ENCODE measurements at regions of chr5 and their contacts with region 1.

Region 1: DNA sequence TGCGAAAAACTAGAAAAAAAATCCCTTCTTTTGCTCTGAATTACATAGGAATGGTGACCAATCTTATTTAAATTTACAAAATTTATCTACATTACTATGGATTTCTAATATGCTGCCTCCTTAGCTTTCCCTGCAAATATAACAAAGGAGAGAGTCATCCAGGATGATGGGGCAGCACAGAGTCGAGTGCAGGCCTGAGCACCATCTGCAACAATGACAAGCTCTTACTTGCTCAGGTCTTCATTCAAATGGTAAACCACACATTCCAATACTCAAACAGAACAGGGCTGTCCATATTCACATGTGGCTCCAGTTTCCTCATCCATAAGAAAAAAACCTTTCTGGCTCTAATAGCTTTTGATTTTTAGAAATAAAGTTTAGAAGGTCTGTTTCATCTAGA is 33.5 kb upstream of the ZNF354B start:
- DNase-seq: no peak
- H3K4me3 ChIP-seq: no peak overlapping the region
- H3K27ac ChIP-seq: no peak overlapping the region
- H3K4me1 ChIP-seq: no peaks in the 10 kb centered on the region
- H3K27me3 ChIP-seq: no peaks in the 10 kb centered on the region
- CTCF ChIP-seq: no peak
- EP300 ChIP-seq: no peak
- POLR2A ChIP-seq: no peak

Region 2: GRCh38 chr5:178474562-178475184 is 351.5 kb before region 1 on chr5:
- intact Hi-C with region 1: loop called in 1 of 4 experiments (anchors 5 kb)
- DNase-seq: no peak
- H3K4me3 ChIP-seq: no peak overlapping the region
- H3K27ac ChIP-seq: no peak overlapping the region
- H3K4me1 ChIP-seq: no peaks in the 10 kb centered on the region
- H3K27me3 ChIP-seq: no peaks in the 10 kb centered on the region
- CTCF ChIP-seq: no peak
- EP300 ChIP-seq: no peak
- POLR2A ChIP-seq: no peak

Region 3: DNA sequence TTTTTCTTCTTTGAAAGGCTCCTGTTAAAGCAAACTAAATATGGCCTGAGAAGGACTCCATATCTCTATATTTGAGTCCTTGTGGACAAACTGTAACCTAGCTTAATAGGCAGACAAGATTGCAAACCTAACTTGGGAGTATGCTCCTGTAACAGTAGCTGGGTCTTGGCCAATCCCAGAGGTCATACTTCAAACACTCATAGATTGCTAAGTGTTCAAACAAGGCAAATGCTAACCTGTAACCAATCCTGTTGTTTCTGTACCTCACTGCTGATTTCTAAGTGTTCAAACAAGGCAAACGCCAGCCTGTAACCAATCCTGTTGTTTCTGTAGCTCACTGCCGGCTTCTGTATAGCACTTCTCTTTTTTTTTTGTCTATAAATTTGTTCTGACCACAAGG is 148.8 kb before region 1 on chr5:
- intact Hi-C with region 1: no loop called
- DNase-seq: no peak
- H3K4me3 ChIP-seq: no peak overlapping the region
- H3K27ac ChIP-seq: no peak overlapping the region
- H3K4me1 ChIP-seq: no peaks in the 10 kb centered on the region
- H3K27me3 ChIP-seq: no peaks in the 10 kb centered on the region
- CTCF ChIP-seq: no peak
- EP300 ChIP-seq: no peak
- POLR2A ChIP-seq: no peak

Region 4: GRCh38 chr5:178872302-178872701 is 46.1 kb after region 1 on chr5:
- intact Hi-C with region 1: no loop called
- DNase-seq: no peak
- H3K4me3 ChIP-seq: no peak overlapping the region
- H3K27ac ChIP-seq: no peak overlapping the region
- H3K4me1 ChIP-seq: no peaks in the 10 kb centered on the region
- H3K27me3 ChIP-seq: no peaks in the 10 kb centered on the region
- CTCF ChIP-seq: no peak
- EP300 ChIP-seq: no peak
- POLR2A ChIP-seq: no peak